CD8-positive, alpha-beta memory T cell (primary cell): ENCODE measurements at regions of chr19 and their contacts with region 1.

Region 1: DNA sequence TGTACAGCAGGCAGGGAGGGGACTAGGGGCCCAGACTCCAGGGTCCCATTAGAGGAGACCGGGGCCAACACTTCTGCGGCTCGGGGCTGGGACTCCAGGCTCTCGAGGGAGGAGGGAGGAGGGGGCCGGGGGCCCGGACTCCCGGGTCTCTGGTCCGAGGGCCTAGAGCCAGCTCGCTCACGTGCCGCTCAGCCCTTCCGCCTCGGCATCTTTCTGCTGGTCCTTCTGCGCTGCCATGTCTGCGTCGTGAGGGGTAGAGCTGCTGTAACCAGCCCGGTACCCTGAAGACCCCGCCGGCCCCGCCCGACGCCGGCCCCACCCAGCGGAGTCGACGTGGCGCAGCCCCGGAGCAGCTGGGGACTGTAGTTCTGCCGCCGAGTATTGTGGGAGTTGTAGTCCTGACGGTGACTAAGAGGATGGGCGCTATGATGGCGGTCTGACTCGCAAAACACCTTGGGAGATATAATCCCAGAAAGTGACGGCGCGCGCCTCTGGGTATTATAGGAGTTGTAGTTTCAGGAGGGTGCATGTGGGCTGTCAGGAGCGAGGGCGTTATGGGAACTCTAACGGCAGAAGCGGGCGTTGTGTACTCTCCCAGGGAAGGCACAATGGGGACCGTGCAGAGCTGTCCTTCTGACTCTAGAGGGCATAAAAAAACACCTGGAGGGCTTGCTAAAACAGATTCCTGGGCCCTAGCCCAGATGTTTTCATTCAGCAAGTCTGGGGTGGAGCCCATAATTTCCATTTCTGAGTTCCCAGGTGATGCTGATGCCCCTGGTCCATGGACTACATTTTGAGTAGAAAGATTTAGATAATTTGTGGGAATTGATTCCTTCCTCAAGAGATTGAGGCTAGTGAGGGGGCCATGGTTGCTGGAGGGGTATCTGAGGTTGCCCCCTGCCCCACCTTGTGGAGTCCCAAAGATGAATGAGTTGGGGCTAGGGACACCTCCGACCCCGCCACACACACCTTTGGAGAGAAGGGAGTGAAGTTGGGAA is at the start of gene RABAC1:
- DNase-seq: peak; percentile 79 to 90 (median 82)
- H3K4me3 ChIP-seq: peak within 1 kb of the TSS; percentile 92
- H3K4me3 Mint-ChIP-seq: peak within 1 kb of the TSS; percentile 92 to 96 (median 94)
- H3K27ac ChIP-seq: peak within 1 kb of the TSS; percentile 86
- H3K27ac Mint-ChIP-seq: peak within 1 kb of the TSS; percentile 82 to 98 (median 94)
- H3K4me1 ChIP-seq: peaks cover 16% of the 10 kb centered on the region
- H3K4me1 Mint-ChIP-seq: peaks cover 17 to 22% (median 21%) of the 10 kb centered on the region in 3 donors
- H3K27me3 ChIP-seq: no peaks in the 10 kb centered on the region
- H3K27me3 Mint-ChIP-seq: no peaks in the 10 kb centered on the region
- total RNA-seq, gene RABAC1: 74.7 to 83.3 TPM

Region 2: DNA sequence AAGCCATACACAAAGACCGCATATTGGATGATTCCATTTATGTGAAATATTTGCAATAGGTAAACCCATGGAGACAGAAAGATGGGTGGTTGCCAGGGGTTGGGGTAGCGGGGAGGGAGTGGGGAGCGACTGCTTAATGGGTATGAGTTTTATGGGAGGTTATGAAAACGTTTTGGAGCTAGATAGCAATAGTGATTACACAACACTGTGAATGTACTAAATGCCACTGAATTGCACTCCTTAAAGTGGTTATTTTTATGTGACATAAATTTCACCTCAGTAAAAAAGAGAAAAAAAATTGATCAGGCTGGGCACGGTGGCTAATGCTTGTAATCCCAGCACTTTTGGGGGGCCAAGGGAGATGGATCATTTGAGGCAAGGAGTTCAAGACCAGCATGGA is 74.1 kb after region 1 on chr19:
- CTCF ChIA-PET with region 1: interaction called, 10 read pairs
- POLR2A ChIA-PET with region 1: no interaction called
- DNase-seq: no peak
- H3K4me3 ChIP-seq: no peak overlapping the region
- H3K4me3 Mint-ChIP-seq: no peak overlapping the region
- H3K27ac ChIP-seq: no peak overlapping the region
- H3K27ac Mint-ChIP-seq: no peak overlapping the region
- H3K4me1 ChIP-seq: no peaks in the 10 kb centered on the region
- H3K4me1 Mint-ChIP-seq: peaks cover 2 to 8% (median 5%) of the 10 kb centered on the region in 3 donors
- H3K27me3 ChIP-seq: no peaks in the 10 kb centered on the region
- H3K27me3 Mint-ChIP-seq: peaks cover 8 to 26% of the 10 kb centered on the region in 2 donors